CD4-positive, alpha-beta T cell (primary cell): ENCODE measurements at regions of chr3 and their contacts with region 1.

Region 1: DNA sequence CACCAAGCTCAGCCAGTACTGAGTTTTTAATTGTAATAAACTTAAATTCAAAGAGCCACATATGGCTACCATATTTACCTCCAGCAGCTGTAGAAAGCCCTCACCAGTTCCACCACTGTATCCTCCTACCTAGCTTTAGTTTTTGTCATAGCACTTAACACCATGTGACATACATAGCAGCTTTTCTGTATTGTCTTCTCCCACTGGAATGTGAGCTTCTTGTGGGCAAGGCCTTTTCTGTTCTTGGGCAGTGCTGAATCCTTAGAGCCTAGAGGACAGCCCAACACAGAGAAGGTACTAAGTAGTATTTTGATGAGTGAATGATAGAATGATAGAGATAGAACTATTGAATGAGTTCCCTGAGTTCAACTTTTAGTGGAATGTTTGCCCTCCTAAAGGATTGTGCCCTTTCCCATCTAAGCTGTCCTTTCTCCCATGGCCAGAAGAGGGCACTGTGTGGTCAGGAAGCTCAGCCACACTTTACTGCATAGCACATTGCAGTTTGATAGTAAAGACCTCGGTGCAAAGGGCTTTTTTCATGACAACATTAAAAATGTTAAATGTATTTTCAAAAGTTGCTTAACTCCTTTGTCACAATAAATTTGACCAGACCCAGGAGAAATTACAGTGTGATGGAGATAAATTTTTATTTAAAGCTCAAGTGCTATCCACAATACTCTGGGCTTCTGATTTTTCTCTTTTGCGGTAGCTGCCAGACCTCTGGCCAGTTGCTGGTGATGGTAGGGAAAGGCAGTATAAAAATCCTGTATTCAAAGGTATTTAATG is 115.8 kb downstream of the GHSR start:
- DNase-seq: peak; percentile 21 to 74 (median 40)
- ATAC-seq: peak; percentile 77
- H3K4me3 ChIP-seq: no peak overlapping the region
- H3K4me3 Mint-ChIP-seq: no peak overlapping the region
- H3K27ac ChIP-seq: no peak overlapping the region
- H3K27ac Mint-ChIP-seq: no peak overlapping the region
- H3K4me1 ChIP-seq: no peaks in the 10 kb centered on the region
- H3K4me1 Mint-ChIP-seq: peaks cover 6% of the 10 kb centered on the region
- H3K27me3 ChIP-seq: no peaks in the 10 kb centered on the region
- H3K27me3 Mint-ChIP-seq: no peaks in the 10 kb centered on the region
- CTCF ChIP-seq: peak; percentile 94

Region 2: DNA sequence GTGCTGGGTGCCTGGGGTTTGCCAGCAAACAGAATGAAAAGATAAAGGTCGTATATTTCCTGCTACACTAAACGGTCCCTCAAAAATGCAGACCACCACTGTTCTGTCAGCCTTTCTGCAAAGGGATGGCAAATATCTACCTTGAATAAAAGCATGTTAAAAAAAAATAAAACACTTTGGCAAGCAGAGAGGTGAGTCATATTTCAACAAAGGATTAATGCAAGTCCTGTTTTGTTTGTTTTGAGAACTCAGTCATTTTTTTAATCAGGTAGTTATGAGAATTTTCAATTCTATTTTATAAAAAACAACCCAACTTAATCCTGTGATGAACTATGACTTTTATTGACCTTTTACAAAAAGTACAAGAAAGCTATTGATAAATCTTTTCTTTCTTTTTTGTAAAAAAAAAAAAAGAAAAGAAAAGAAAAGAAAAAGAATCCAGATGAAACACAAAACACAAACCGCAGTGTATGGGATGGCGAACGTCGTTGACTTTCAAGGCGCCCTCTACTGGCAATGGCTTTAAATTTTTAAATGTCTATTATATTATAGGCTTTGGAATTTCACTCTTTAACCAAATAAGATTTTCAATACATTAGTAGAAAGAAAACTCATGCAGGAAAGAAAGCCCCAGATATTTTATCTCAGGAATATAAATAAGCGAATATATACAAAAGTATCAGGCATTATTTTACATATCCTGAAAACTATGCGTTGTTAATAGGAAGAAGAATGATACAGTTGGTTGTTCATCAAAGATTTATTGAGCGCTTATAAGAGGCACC is 290.7 kb after region 1 on chr3:
- CTCF ChIA-PET with region 1: interaction called, 6 read pairs
- POLR2A ChIA-PET with region 1: no interaction called
- intact Hi-C with region 1: loop called in 1 of 2 experiments (anchors 1 kb)
- DNase-seq: peak in 12 of 14 experiments; percentile 3 to 71 (median 29)
- ATAC-seq: peak; percentile 56
- H3K4me3 ChIP-seq: no peak overlapping the region
- H3K4me3 Mint-ChIP-seq: no peak overlapping the region
- H3K27ac ChIP-seq: no peak overlapping the region
- H3K27ac Mint-ChIP-seq: no peak overlapping the region
- H3K4me1 ChIP-seq: no peaks in the 10 kb centered on the region
- H3K4me1 Mint-ChIP-seq: peaks cover 11% of the 10 kb centered on the region
- H3K27me3 ChIP-seq: no peaks in the 10 kb centered on the region
- H3K27me3 Mint-ChIP-seq: no peaks in the 10 kb centered on the region
- CTCF ChIP-seq: peak; percentile 91

Region 3: GRCh38 chr3:172666873-172667694 is 334.6 kb after region 1 on chr3:
- CTCF ChIA-PET with region 1: interaction called, 13 read pairs
- POLR2A ChIA-PET with region 1: no interaction called
- intact Hi-C with region 1: loop called (anchors 1 to 2 kb)
- DNase-seq: peak; percentile 45 to 87 (median 70)
- ATAC-seq: peak; percentile 67
- H3K4me3 ChIP-seq: no peak overlapping the region
- H3K4me3 Mint-ChIP-seq: no peak overlapping the region
- H3K27ac ChIP-seq: no peak overlapping the region
- H3K27ac Mint-ChIP-seq: no peak overlapping the region
- H3K4me1 ChIP-seq: peaks cover 18% of the 10 kb centered on the region
- H3K4me1 Mint-ChIP-seq: peaks cover 16% of the 10 kb centered on the region
- H3K27me3 ChIP-seq: no peaks in the 10 kb centered on the region
- H3K27me3 Mint-ChIP-seq: no peaks in the 10 kb centered on the region
- CTCF ChIP-seq: peak; percentile 74